Dorsolateral prefrontal cortex (tissue), 120 donors: ENCODE measurements at regions of chr5 and their contacts with region 1.

Region 1: GRCh38 chr5:137629646-137630045 is 106.2 kb downstream of the KLHL3 start:
- DNase-seq: peak in 3 of 10 donors; percentile 27 to 87 (median 47)
- H3K4me3 ChIP-seq: peak overlapping the region in 8 of 59 donors; percentile 0 to 36 (median 25)
- H3K27ac ChIP-seq: peak overlapping the region in 51 of 59 donors; percentile 0 to 90 (median 56)
- H3K27me3 ChIP-seq: no peaks in the 10 kb centered on the region
- CTCF ChIP-seq: peak; percentile 87 to 99 (median 93)

Region 2: DNA sequence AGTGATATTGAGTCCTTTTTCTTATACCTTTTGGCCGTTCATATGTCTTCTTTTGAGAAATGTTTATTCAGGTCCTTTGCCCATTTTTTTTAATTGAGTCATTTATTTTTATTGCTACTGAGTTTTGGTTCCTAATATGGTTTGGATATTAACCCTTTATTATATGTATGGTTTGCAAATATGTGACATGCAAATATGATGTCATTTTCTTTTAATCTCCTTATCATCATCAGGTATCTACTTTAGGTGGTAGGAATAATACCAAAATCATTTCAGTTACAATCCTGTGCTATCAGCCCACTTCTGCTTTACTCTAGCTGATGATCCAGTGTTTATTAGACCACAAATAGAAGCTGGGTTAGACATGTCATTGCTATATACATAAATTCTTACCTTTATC is 1162.0 kb before region 1 on chr5:
- intact Hi-C with region 1: no loop called
- DNase-seq: no peak
- H3K4me3 ChIP-seq: no peak overlapping the region
- H3K27ac ChIP-seq: no peak overlapping the region
- H3K27me3 ChIP-seq: peaks cover 0 to 30% (median 0%) of the 10 kb centered on the region in 45 donors
- CTCF ChIP-seq: no peak

Region 3: DNA sequence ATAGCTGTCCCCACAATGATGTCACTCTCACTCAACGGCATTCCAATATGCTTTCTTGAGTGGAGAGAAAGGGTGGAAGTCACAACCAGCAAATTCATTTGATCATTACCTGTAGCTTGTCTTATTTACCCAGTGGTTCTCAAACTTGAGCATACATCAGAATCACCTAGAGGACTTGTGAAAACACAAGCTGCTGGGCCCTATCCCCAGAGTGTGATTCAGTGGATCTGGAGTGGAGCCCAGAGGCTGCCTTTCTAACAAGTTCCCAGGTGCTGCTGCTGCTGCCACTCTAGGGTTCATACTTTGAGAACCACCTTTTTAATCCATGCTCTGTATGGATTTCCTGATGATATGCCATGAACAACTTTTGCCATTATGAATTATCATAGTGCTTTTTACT is 11.5 kb after region 1 on chr5:
- intact Hi-C with region 1: no loop called
- DNase-seq: peak in 2 of 10 donors; percentile 59 to 67
- H3K4me3 ChIP-seq: no peak overlapping the region
- H3K27ac ChIP-seq: peak overlapping the region in 19 of 59 donors; percentile 6 to 78 (median 36)
- H3K27me3 ChIP-seq: no peaks in the 10 kb centered on the region
- CTCF ChIP-seq: no peak

Region 4: GRCh38 chr5:137743031-137743640 is 113.5 kb after region 1 on chr5:
- intact Hi-C with region 1: loop called (anchors 5 kb)
- DNase-seq: peak in 5 of 10 donors; percentile 28 to 71 (median 44)
- H3K4me3 ChIP-seq: no peak overlapping the region
- H3K27ac ChIP-seq: no peak overlapping the region
- H3K27me3 ChIP-seq: no peaks in the 10 kb centered on the region
- CTCF ChIP-seq: peak; percentile 38 to 83 (median 70)

Region 5: GRCh38 chr5:138138949-138139780 is 509.5 kb after region 1 on chr5 and contains the start of gene NME5:
- intact Hi-C with region 1: loop called (anchors 5 to 10 kb)
- DNase-seq: peak; percentile 57 to 90 (median 84)
- H3K4me3 ChIP-seq: peak within 1 kb of the TSS; percentile 47 to 88 (median 75)
- H3K27ac ChIP-seq: peak within 1 kb of the TSS in 26 of 59 donors; percentile 3 to 73 (median 46)
- H3K27me3 ChIP-seq: no peaks in the 10 kb centered on the region
- CTCF ChIP-seq: peak in 2 of 56 donors; percentile 13 to 15
- total RNA-seq, gene NME5: 12.9 to 48.5 (median 31.0) TPM

Region 6: GRCh38 chr5:138149530-138149929 is 519.9 kb after region 1 on chr5:
- intact Hi-C with region 1: no loop called
- DNase-seq: no peak
- H3K4me3 ChIP-seq: no peak overlapping the region
- H3K27ac ChIP-seq: no peak overlapping the region
- H3K27me3 ChIP-seq: no peaks in the 10 kb centered on the region
- CTCF ChIP-seq: no peak